Right ventricle myocardium inferior (tissue), 1 donor: ENCODE measurements at regions of chr19 and their contacts with region 1.

Region 1: GRCh38 chr19:11155373-11156120 is at the start of gene SPC24:
- DNase-seq: peak; percentile 97
- ATAC-seq: peak; percentile 93
- total RNA-seq, gene SPC24: 8.6 TPM

Region 2: GRCh38 chr19:11130824-11131455 is 24.6 kb before region 1 on chr19:
- intact Hi-C with region 1: no loop called
- DNase-seq: peak; percentile 89
- ATAC-seq: peak; percentile 87

Region 3: DNA sequence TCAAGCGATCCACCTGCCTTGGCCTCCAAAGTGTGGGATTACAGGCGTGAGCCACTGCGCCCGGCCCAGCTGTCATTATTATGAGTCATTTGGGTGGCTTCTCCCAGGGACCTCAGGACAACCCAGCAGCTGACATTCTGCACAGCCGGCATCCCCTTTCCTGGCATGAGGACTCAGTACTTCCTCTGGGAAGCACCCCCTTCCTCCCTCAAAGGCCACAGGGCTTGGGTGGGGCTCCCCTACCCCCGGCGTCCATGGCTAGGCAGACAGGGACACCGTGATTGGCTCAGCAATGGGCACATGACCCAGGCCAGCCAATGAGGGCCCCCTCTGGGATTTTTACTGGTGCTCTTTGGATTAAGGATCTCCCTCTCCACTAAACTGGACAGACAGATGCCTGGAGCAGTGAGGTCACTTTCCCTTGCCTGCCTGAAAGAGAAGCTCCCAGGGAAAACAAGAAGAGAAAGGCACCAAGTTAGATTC is 35.8 kb after region 1 on chr19:
- intact Hi-C with region 1: loop called (anchors 2 kb)
- DNase-seq: peak; percentile 86
- ATAC-seq: peak; percentile 81